Colonic mucosa (tissue), 4 donors: ENCODE measurements at regions of chr11 and their contacts with region 1.

Region 1: GRCh38 chr11:114036156-114036811 is 23.2 kb upstream of the ZBTB16 start:
- DNase-seq: peak; percentile 86
- H3K4me3 ChIP-seq: peak overlapping the region; percentile 17
- H3K27ac ChIP-seq: peak overlapping the region; percentile 18
- H3K4me1 ChIP-seq: no peaks in the 10 kb centered on the region
- H3K27me3 ChIP-seq: no peaks in the 10 kb centered on the region
- CTCF ChIP-seq: peak; percentile 81

Region 2: GRCh38 chr11:113849713-113850112 is 186.6 kb before region 1 on chr11:
- intact Hi-C with region 1: no loop called
- DNase-seq: no peak
- H3K4me3 ChIP-seq: no peak overlapping the region
- H3K27ac ChIP-seq: no peak overlapping the region
- H3K4me1 ChIP-seq: no peaks in the 10 kb centered on the region
- H3K27me3 ChIP-seq: no peaks in the 10 kb centered on the region
- CTCF ChIP-seq: no peak

Region 3: GRCh38 chr11:113906038-113906437 is 130.2 kb before region 1 on chr11:
- intact Hi-C with region 1: loop called (anchors 10 kb)
- DNase-seq: peak; percentile 68
- H3K4me3 ChIP-seq: no peak overlapping the region
- H3K27ac ChIP-seq: no peak overlapping the region
- H3K4me1 ChIP-seq: no peaks in the 10 kb centered on the region
- H3K27me3 ChIP-seq: no peaks in the 10 kb centered on the region
- CTCF ChIP-seq: peak; percentile 34